ENCODE measurements at regions of chr11 and their contacts with region 1.

Region 1: DNA sequence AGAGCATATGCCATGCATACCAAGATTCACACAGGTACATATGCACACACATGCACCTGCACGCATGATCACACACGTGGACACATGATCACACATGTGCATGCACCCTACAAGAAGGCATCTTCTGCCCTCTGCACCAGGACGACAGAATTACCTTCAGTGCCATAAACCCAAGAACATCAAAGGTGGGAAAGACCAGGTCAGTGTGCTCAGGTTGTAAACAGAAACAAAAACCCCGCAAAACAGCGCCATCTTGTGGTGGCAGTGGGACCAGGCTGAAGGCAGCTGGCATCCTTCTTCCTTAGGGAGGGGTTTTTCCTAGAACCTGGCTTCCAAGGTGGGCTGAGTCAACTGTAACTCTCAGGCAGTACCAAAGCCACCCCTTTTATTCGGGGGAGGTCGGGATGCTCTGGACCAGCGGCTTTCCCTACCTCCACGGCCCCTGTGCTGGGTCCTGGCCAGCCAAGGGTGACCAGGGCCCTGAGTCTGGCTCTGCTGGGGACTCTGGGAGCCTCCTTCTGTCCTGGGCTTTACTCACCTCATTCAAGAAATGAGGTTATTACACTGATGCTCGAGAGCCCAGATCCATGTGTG is 69.4 kb upstream of the FGF3 start:
- DNase-seq: peak; percentile 90
- H3K4me3 ChIP-seq: peak overlapping the region in 1 of 2 experiments; percentile 19; a peak in 1 of 4 replicates
- H3K27ac ChIP-seq: no peak overlapping the region; a peak in 1 of 4 replicates
- H3K4me1 ChIP-seq: peaks cover 0 to 21% of the 10 kb centered on the region in 2 experiments; a peak in 2 of 4 replicates
- H3K27me3 ChIP-seq: 0 out of 2 replicates have a peak, but pooled peaks cover 8% of the 10 kb centered on the region
- CTCF ChIP-seq: peak; percentile 91
- EP300 ChIP-seq: no peak
- RAD21 ChIP-seq: peak; percentile 75

Region 2: GRCh38 chr11:69683764-69684333 is 204.7 kb before region 1 on chr11:
- CTCF ChIA-PET with region 1: interaction called, 10 read pairs
- POLR2A ChIA-PET with region 1: no interaction called
- DNase-seq: no peak
- H3K4me3 ChIP-seq: no peak overlapping the region
- H3K27ac ChIP-seq: no peak overlapping the region
- H3K4me1 ChIP-seq: no peaks in the 10 kb centered on the region; a peak in 1 of 4 replicates
- H3K27me3 ChIP-seq: no peaks in the 10 kb centered on the region
- CTCF ChIP-seq: peak; percentile 47
- EP300 ChIP-seq: no peak
- RAD21 ChIP-seq: peak; percentile 59

Region 3: GRCh38 chr11:69704508-69705253 is 183.9 kb before region 1 on chr11:
- CTCF ChIA-PET with region 1: interaction called, 34 read pairs
- POLR2A ChIA-PET with region 1: no interaction called
- DNase-seq: peak; percentile 91
- H3K4me3 ChIP-seq: peak overlapping the region; percentile 31 to 41; a peak in 3 of 4 replicates
- H3K27ac ChIP-seq: no peak overlapping the region
- H3K4me1 ChIP-seq: peaks cover 0 to 13% of the 10 kb centered on the region in 2 experiments; a peak in 2 of 4 replicates
- H3K27me3 ChIP-seq: peaks cover 38% of the 10 kb centered on the region
- CTCF ChIP-seq: peak; percentile 68
- EP300 ChIP-seq: no peak
- RAD21 ChIP-seq: peak; percentile 73

Region 4: DNA sequence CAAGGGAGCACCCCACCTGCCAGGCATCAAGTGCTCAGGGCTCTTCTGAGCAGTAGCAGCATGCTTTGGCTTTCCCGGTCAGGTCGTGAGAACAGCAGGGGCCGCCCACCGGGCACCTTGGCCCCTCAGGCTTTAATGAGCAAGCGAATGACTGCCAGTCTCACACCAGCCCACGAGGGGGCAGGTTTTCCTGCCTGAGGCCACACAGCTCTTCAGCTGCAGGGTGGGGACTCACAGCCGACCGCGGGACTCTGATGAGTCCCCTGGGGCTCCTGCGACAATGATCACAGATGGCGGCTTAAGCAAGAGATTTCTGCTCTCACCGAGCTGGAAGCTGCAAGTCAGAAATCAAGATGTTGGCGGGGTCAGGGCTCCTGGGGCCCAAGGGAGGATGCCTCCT is 170.4 kb before region 1 on chr11:
- CTCF ChIA-PET with region 1: interaction called, 14 read pairs
- POLR2A ChIA-PET with region 1: no interaction called
- DNase-seq: peak; percentile 73
- H3K4me3 ChIP-seq: no peak overlapping the region
- H3K27ac ChIP-seq: no peak overlapping the region
- H3K4me1 ChIP-seq: no peaks in the 10 kb centered on the region; a peak in 1 of 4 replicates
- H3K27me3 ChIP-seq: peaks cover 35% of the 10 kb centered on the region; the same call in 1 of the 2 replicates
- CTCF ChIP-seq: peak; percentile 58
- EP300 ChIP-seq: no peak
- RAD21 ChIP-seq: peak; percentile 39

Region 5: DNA sequence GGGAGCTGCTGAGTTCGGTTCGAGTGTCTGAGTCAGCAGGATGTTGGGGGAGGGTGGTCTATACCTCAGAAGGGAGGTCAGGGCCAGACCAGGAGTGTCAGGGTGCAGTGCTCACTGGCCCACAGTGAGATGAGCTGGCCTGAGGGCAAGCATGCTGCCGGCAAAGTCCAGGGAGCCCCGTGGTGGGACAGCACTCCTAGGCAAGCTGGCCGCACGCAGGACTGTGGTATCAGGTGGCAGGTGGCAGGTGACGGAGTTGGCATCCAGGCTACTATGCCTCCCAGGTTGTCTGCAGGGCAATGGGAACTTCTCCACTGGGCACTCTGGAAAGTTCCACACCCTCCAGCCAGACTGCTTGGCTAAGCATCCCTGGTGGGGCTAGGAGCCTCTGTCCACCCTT is 74.2 kb before region 1 on chr11:
- CTCF ChIA-PET with region 1: no interaction called
- POLR2A ChIA-PET with region 1: no interaction called
- DNase-seq: no peak
- H3K4me3 ChIP-seq: no peak overlapping the region
- H3K27ac ChIP-seq: no peak overlapping the region
- H3K4me1 ChIP-seq: no peaks in the 10 kb centered on the region; a peak in 1 of 4 replicates
- H3K27me3 ChIP-seq: peaks cover 37% of the 10 kb centered on the region
- CTCF ChIP-seq: no peak
- EP300 ChIP-seq: no peak
- RAD21 ChIP-seq: no peak

Region 6: GRCh38 chr11:69874984-69875624 is 13.5 kb before region 1 on chr11:
- CTCF ChIA-PET with region 1: interaction called, 16 read pairs
- POLR2A ChIA-PET with region 1: no interaction called
- DNase-seq: peak; percentile 13
- H3K4me3 ChIP-seq: no peak overlapping the region
- H3K27ac ChIP-seq: no peak overlapping the region
- H3K4me1 ChIP-seq: peaks cover 0 to 8% of the 10 kb centered on the region in 2 experiments; a peak in 1 of 4 replicates
- H3K27me3 ChIP-seq: no peaks in the 10 kb centered on the region
- CTCF ChIP-seq: no peak
- EP300 ChIP-seq: no peak
- RAD21 ChIP-seq: no peak